B cell (primary cell): ENCODE measurements at regions of chr4 and their contacts with region 1.

Region 1: DNA sequence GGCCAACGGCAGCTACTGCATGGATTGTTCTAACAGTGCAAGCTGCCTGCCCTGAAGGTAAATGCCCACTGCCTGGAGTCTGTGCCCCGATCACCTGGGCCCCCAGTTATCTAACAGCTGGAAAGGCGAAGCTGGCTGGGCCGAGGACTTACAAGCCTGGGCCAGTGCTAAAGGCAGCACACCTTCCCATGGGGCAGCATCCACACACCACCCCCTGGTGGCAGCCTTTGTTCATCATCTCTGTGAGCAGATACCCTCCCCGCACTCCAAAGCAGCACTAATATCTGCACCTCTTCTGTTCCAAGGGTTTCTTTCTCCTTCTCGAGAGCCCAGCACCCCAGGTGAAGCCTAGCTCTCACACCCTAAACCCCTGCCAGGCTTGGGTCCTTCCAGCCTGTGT is 7.6 kb downstream of the SLC2A9 start:
- DNase-seq: peak; percentile 29
- ATAC-seq: no peak
- H3K4me3 ChIP-seq: no peak overlapping the region
- H3K4me3 Mint-ChIP-seq: no peak overlapping the region
- H3K27ac ChIP-seq: no peak overlapping the region
- H3K27ac Mint-ChIP-seq: no peak overlapping the region
- H3K4me1 ChIP-seq: peaks cover 0 to 5% of the 10 kb centered on the region in 2 donors
- H3K4me1 Mint-ChIP-seq: peaks cover 7% of the 10 kb centered on the region
- H3K27me3 ChIP-seq: no peaks in the 10 kb centered on the region
- H3K27me3 Mint-ChIP-seq: no peaks in the 10 kb centered on the region
- CTCF ChIP-seq: peak; percentile 14

Region 2: GRCh38 chr4:9735515-9735914 is 278.2 kb before region 1 on chr4:
- CTCF ChIA-PET with region 1: no interaction called
- POLR2A ChIA-PET with region 1: no interaction called
- intact Hi-C with region 1: no loop called
- DNase-seq: no peak
- ATAC-seq: no peak
- H3K4me3 ChIP-seq: no peak overlapping the region
- H3K4me3 Mint-ChIP-seq: no peak overlapping the region
- H3K27ac ChIP-seq: no peak overlapping the region
- H3K27ac Mint-ChIP-seq: no peak overlapping the region
- H3K4me1 ChIP-seq: no peaks in the 10 kb centered on the region
- H3K4me1 Mint-ChIP-seq: no peaks in the 10 kb centered on the region
- H3K27me3 ChIP-seq: no peaks in the 10 kb centered on the region
- H3K27me3 Mint-ChIP-seq: no peaks in the 10 kb centered on the region
- CTCF ChIP-seq: no peak

Region 3: GRCh38 chr4:9762823-9763475 is 250.8 kb before region 1 on chr4:
- CTCF ChIA-PET with region 1: interaction called, 22 read pairs
- POLR2A ChIA-PET with region 1: no interaction called
- intact Hi-C with region 1: loop called (anchors 1 kb)
- DNase-seq: peak; percentile 48
- ATAC-seq: no peak
- H3K4me3 ChIP-seq: no peak overlapping the region
- H3K4me3 Mint-ChIP-seq: no peak overlapping the region
- H3K27ac ChIP-seq: no peak overlapping the region
- H3K27ac Mint-ChIP-seq: no peak overlapping the region
- H3K4me1 ChIP-seq: no peaks in the 10 kb centered on the region
- H3K4me1 Mint-ChIP-seq: no peaks in the 10 kb centered on the region
- H3K27me3 ChIP-seq: no peaks in the 10 kb centered on the region
- H3K27me3 Mint-ChIP-seq: peaks cover 14% of the 10 kb centered on the region
- CTCF ChIP-seq: peak; percentile 45

Region 4: GRCh38 chr4:9919047-9919446 is 94.7 kb before region 1 on chr4:
- CTCF ChIA-PET with region 1: no interaction called
- POLR2A ChIA-PET with region 1: no interaction called
- intact Hi-C with region 1: no loop called
- DNase-seq: no peak
- ATAC-seq: no peak
- H3K4me3 ChIP-seq: no peak overlapping the region
- H3K4me3 Mint-ChIP-seq: no peak overlapping the region
- H3K27ac ChIP-seq: no peak overlapping the region
- H3K27ac Mint-ChIP-seq: no peak overlapping the region
- H3K4me1 ChIP-seq: no peaks in the 10 kb centered on the region
- H3K4me1 Mint-ChIP-seq: no peaks in the 10 kb centered on the region
- H3K27me3 ChIP-seq: no peaks in the 10 kb centered on the region
- H3K27me3 Mint-ChIP-seq: no peaks in the 10 kb centered on the region
- CTCF ChIP-seq: no peak

Region 5: DNA sequence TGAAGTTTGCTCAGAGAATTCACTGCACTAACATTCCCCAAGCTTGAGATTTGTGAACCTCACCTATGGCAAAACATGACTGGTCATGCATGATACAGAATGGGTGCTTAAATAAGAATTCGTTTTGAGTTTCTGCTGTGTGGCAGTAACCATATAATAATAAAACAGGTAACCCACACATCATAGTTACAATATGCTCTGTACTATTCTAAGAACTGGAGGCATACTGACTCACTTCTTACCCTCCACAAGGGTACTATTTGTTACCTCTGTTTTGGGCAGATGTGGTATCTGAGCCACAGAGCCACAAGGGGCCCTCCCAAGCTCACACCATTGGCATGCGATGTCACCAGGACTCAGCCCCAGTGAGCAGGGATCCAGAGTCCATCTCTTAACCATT is 10.1 kb before region 1 on chr4:
- CTCF ChIA-PET with region 1: no interaction called
- POLR2A ChIA-PET with region 1: no interaction called
- intact Hi-C with region 1: no loop called
- DNase-seq: no peak
- ATAC-seq: no peak
- H3K4me3 ChIP-seq: no peak overlapping the region
- H3K4me3 Mint-ChIP-seq: no peak overlapping the region
- H3K27ac ChIP-seq: no peak overlapping the region
- H3K27ac Mint-ChIP-seq: no peak overlapping the region
- H3K4me1 ChIP-seq: peaks cover 18 to 26% of the 10 kb centered on the region in 2 donors
- H3K4me1 Mint-ChIP-seq: peaks cover 32% of the 10 kb centered on the region
- H3K27me3 ChIP-seq: no peaks in the 10 kb centered on the region
- H3K27me3 Mint-ChIP-seq: no peaks in the 10 kb centered on the region
- CTCF ChIP-seq: no peak